MCF 10A (cell line): ENCODE measurements at regions of chr5 and their contacts with region 1.

Region 1: DNA sequence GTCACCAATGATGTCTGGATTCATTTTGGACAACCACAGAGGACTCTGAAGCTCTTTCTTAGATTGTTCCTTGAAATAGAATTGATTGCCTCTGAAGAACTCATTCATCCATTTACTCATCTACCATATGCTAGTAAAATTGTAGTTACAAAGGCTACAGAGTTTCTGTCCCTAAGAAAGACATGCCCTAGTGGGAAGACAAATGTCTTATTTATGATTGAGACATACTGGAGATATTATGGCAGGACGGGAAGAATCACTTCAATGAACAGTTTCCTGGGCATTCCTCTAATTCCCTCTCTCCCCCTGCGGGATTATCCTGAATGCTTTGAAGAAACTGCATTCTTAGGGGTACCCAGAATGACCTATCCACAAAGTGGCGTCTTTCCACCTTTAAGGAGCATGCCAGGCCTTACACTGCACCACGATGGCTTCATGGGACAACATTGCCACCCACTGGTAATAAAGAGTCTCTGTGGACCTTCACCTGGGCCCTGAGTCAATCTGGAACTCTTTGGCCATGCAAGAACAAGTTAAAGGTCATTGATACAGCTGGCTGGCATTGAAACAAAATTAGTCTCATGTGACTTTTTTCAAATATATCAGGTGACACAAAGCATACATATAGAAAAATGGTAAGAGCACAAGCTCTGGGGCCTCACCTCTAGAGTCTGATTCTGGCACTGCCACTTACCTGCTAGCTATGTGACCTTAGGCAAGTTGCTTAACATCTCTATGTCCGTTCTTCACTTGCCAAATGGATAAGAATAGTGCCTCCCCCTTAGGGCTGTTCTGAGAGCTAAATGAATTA is 32.1 kb downstream of the ANKRD55 start:
- DNase-seq: peak; percentile 81
- H3K4me3 Mint-ChIP-seq: no peak overlapping the region
- H3K27ac Mint-ChIP-seq: no peak overlapping the region
- H3K4me1 Mint-ChIP-seq: no peaks in the 10 kb centered on the region
- H3K27me3 Mint-ChIP-seq: no peaks in the 10 kb centered on the region
- CTCF ChIP-seq: peak; percentile 87

Region 2: DNA sequence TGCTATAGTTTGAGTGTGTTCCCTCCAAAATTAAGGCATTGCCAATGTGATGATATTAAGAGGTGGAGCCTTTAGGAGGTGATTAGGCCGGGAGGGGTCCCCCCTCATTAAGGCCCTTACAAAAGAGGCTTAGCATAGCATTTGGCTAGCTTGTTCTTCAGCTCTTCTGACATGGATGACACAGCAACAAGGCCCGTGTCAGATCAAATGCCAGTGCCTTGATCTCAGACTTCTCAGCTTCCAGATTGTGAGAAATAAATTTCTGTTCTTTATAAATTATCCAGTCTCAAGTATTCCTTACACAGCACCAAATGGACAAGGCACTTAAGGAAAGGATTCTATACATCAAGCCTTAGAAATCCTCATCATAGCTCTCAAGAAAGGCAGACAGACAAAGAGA is 520.7 kb before region 1 on chr5:
- CTCF ChIA-PET with region 1: no interaction called
- POLR2A ChIA-PET with region 1: no interaction called
- intact Hi-C with region 1: no loop called
- DNase-seq: no peak
- H3K4me3 Mint-ChIP-seq: no peak overlapping the region
- H3K27ac Mint-ChIP-seq: peak overlapping the region; percentile 64
- H3K4me1 Mint-ChIP-seq: peaks cover 13% of the 10 kb centered on the region
- H3K27me3 Mint-ChIP-seq: no peaks in the 10 kb centered on the region
- CTCF ChIP-seq: no peak

Region 3: DNA sequence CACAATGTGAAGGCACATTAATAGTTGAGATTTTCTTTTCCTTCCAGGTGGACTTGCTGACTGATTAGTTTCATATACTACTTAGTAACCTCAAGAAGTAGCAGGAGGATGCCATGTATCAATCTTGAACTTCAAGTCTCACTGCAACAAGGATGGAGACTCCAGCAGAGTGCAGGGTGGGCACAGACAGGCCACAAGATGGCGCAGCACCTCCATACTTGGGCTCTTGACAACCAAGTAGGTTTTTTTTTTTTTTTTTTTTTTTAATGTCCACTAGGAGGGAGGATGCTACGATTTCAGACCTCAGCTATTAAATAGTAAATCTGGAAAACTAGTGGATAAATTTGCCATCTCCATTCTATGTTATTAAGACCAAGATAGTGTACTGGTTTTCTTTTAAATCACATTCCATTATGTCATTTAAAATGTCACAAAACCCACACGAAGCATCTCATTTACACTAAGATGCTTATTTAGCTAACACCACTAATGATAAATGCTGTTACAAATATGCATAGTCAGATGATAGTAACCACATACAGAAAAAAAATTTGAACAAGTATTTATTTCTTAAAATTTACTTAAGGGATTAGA is 264.9 kb before region 1 on chr5:
- CTCF ChIA-PET with region 1: interaction called, 124 read pairs
- POLR2A ChIA-PET with region 1: interaction called, 6 read pairs
- intact Hi-C with region 1: loop called (anchors 1 kb)
- DNase-seq: peak; percentile 76
- H3K4me3 Mint-ChIP-seq: no peak overlapping the region
- H3K27ac Mint-ChIP-seq: no peak overlapping the region
- H3K4me1 Mint-ChIP-seq: no peaks in the 10 kb centered on the region
- H3K27me3 Mint-ChIP-seq: no peaks in the 10 kb centered on the region
- CTCF ChIP-seq: peak; percentile 60

Region 4: DNA sequence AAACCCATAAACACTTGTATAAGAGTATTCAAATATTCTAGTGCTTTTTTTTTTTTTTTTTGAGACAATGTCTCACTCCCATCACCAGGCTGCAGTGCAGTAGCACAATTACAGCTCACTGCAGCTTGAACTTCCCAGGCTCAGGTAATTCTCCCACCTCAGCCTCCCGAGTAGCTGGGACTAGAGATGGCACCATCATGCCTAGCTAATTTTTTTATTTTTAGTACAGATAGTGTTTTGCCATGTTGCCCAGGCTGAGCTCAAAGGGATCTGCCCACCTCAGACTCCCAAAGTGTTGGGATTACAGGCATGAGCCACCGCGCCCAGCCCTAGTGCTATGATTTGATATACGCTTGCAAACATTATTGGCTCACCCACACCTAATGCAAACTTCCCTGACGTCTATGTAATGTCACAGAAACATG is 218.1 kb before region 1 on chr5:
- CTCF ChIA-PET with region 1: interaction called, 59 read pairs
- POLR2A ChIA-PET with region 1: interaction called, 7 read pairs
- intact Hi-C with region 1: loop called (anchors 1 kb)
- DNase-seq: peak; percentile 26
- H3K4me3 Mint-ChIP-seq: no peak overlapping the region
- H3K27ac Mint-ChIP-seq: no peak overlapping the region
- H3K4me1 Mint-ChIP-seq: peaks cover 5% of the 10 kb centered on the region
- H3K27me3 Mint-ChIP-seq: no peaks in the 10 kb centered on the region
- CTCF ChIP-seq: peak; percentile 26

Region 5: GRCh38 chr5:55994574-55995333 is 206.3 kb before region 1 on chr5 and contains the start of gene IL6ST:
- CTCF ChIA-PET with region 1: interaction called, 21 read pairs
- POLR2A ChIA-PET with region 1: interaction called, 8 read pairs
- intact Hi-C with region 1: loop called (anchors 1 kb)
- DNase-seq: peak; percentile 98
- H3K4me3 Mint-ChIP-seq: peak within 1 kb of the TSS; percentile 89
- H3K27ac Mint-ChIP-seq: peak within 1 kb of the TSS; percentile 96
- H3K4me1 Mint-ChIP-seq: peaks cover 34% of the 10 kb centered on the region
- H3K27me3 Mint-ChIP-seq: no peaks in the 10 kb centered on the region
- CTCF ChIP-seq: no peak
- total RNA-seq, gene IL6ST: 108 and 115 TPM in 2 replicates

Region 6: DNA sequence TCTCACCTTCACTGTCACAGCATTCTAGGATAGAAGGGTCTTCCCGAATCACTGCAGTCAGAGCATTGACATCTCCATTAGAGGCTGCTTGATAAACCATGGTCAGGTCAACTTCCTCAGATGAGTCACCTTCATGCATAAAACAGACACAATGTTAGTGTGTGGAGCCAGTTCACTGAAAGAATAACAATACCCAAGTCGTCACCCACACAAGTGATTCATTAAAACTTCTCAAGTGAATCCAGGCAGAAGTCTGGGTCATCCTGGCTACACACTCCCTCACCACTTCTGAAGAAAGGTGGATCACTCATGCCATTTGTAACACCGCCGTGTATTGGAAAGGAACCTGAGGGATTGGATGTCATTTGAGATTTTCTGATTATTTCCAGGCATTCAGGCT is 17.6 kb before region 1 on chr5:
- CTCF ChIA-PET with region 1: interaction called, 18 read pairs
- POLR2A ChIA-PET with region 1: no interaction called
- intact Hi-C with region 1: no loop called
- DNase-seq: peak; percentile 89
- H3K4me3 Mint-ChIP-seq: no peak overlapping the region
- H3K27ac Mint-ChIP-seq: no peak overlapping the region
- H3K4me1 Mint-ChIP-seq: peaks cover 6% of the 10 kb centered on the region
- H3K27me3 Mint-ChIP-seq: no peaks in the 10 kb centered on the region
- CTCF ChIP-seq: no peak

Region 7: GRCh38 chr5:56838409-56839039 is 637.5 kb after region 1 on chr5:
- CTCF ChIA-PET with region 1: interaction called, 12 read pairs
- POLR2A ChIA-PET with region 1: no interaction called
- intact Hi-C with region 1: no loop called
- DNase-seq: peak; percentile 63
- H3K4me3 Mint-ChIP-seq: peak overlapping the region; percentile 41
- H3K27ac Mint-ChIP-seq: peak overlapping the region; percentile 73
- H3K4me1 Mint-ChIP-seq: peaks cover 32% of the 10 kb centered on the region
- H3K27me3 Mint-ChIP-seq: no peaks in the 10 kb centered on the region
- CTCF ChIP-seq: peak; percentile 74